ENCODE measurements at regions of chr7 and their contacts with region 1.

Region 1: GRCh38 chr7:151038951-151039849 is 9.1 kb upstream of the ASIC3 start:
- DNase-seq: no peak
- H3K4me3 Mint-ChIP-seq: peak overlapping the region; percentile 19
- H3K27ac Mint-ChIP-seq: peak overlapping the region; percentile 96
- H3K4me1 Mint-ChIP-seq: peaks cover 18% of the 10 kb centered on the region
- H3K27me3 Mint-ChIP-seq: no peaks in the 10 kb centered on the region

Region 2: DNA sequence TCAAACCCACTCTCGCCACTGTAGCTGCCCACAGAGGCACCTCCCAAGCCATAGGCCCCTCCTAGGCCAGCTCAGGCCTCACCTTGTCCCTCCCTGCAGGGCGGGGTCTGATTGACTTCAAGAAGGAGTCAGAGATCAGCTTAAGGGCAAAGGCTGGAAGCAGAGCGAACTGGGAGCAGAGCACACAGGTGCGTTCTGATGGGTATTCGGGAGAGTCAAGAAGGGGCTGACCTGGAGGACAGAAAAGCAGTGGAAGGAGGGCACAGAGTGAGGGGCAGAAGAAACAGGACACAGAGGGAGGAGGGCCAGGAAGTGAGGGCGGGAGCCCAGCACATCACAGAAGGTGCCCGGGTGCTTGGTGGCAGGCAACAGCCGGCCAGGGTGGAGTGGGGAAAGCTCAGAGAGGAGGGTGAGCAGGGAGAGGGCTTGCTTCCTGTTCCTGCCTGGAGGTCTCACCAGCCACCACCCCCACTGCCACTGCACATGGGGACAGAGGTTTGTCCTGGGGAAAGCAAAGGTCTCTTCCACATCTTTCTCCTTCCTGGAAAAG is 186.8 kb before region 1 on chr7 and contains the start of gene AOC1:
- intact Hi-C with region 1: no loop called
- DNase-seq: no peak
- H3K4me3 Mint-ChIP-seq: no peak within 1 kb of the TSS
- H3K27ac Mint-ChIP-seq: no peak within 1 kb of the TSS
- H3K4me1 Mint-ChIP-seq: no peaks in the 10 kb centered on the region
- H3K27me3 Mint-ChIP-seq: peaks cover 13% of the 10 kb centered on the region
- total RNA-seq, gene AOC1: not detected in 2 replicates

Region 3: GRCh38 chr7:150988230-150989226 is 50.7 kb before region 1 on chr7:
- intact Hi-C with region 1: no loop called
- DNase-seq: peak; percentile 57
- H3K4me3 Mint-ChIP-seq: peak overlapping the region; percentile 58
- H3K27ac Mint-ChIP-seq: no peak overlapping the region
- H3K4me1 Mint-ChIP-seq: peaks cover 25% of the 10 kb centered on the region
- H3K27me3 Mint-ChIP-seq: peaks cover 30% of the 10 kb centered on the region

Region 4: DNA sequence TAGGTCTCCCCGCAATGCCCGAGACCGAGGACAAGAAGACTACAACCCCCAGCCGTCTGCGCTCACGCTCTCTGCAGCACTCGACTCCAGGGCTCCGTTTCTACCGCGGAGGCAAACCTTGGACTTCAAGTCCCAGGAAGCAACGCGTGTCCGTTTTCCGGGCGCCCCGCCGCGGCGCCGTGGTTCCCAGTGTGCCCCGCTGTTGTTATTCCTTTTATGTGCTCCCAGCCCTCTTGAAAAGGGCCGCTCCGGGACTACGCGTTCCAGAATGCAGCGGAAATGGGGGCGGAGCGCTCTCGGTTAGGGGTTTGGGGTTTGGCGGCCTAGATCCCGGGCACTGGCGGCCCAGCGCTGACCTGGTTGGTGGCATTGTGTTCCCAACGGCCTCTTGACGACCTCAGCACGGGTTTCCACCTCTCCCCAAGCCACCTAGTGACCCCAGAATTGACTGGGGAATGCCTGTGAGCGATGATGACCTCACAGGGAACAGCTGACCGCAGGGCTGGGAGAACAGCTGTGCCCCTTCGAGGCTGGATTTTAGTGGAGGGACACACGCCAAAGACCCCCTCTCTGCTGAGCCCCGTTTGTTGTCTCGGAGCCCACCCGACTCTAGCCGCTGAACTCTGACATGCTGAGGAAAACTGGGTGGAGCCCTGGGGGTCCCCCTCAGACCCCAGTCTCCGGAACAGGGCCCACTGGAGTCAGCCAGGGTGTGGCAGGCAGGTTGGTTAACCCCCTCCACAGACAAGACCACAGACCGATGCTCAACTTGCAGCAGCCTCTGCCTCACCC is 19.0 kb after region 1 on chr7:
- intact Hi-C with region 1: loop called (anchors 1 kb)
- DNase-seq: peak; percentile 95
- H3K4me3 Mint-ChIP-seq: peak overlapping the region; percentile 93
- H3K27ac Mint-ChIP-seq: peak overlapping the region; percentile 92
- H3K4me1 Mint-ChIP-seq: peaks cover 46% of the 10 kb centered on the region
- H3K27me3 Mint-ChIP-seq: no peaks in the 10 kb centered on the region

Region 5: DNA sequence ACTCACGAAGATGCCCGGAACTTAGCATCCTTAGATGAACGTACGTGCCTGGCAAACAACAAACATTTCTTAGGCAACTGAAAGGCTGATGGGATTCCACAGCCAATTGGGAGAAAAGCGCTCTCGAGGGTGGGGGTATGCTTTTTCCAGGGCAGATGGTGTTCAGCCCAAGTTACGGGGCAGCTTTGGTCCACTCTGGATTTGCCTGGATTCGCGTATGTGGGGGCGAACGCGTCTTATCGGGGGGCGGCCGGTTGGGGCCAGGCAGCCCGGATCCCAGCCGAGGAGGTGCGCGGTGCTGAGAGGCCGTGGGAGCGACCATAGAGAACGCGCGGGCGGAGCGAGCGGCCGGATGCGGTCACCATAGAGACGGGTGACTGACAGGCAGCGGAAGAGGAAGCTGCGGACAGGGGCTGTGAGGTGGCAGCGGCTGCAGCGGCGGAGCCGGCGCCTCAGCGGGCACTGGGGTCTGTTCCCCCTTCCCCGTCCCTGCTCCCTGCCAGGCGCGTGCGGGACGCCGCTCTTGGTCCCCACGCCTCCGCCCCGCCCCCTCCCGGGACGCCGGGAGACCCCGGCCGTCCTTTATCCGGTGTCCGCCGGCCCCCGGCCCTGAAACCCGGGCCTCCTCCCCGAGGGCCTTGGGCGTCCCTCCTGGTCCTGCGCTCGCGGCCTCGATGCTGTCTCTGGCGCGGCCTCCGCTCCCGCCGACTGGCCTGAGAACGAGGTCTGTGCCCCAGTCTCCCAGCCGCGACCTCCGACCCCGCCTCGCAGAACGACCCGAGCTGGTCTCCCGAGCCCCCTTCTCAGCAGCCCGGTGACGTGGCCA is 193.1 kb after region 1 on chr7 and contains the start of gene CHPF2:
- intact Hi-C with region 1: no loop called
- DNase-seq: peak; percentile 89
- H3K4me3 Mint-ChIP-seq: peak within 1 kb of the TSS; percentile 100
- H3K27ac Mint-ChIP-seq: peak within 1 kb of the TSS; percentile 98
- H3K4me1 Mint-ChIP-seq: peaks cover 35% of the 10 kb centered on the region
- H3K27me3 Mint-ChIP-seq: peaks cover 2% of the 10 kb centered on the region
- total RNA-seq, gene CHPF2: 45.6 and 48.5 TPM in 2 replicates

Region 6: DNA sequence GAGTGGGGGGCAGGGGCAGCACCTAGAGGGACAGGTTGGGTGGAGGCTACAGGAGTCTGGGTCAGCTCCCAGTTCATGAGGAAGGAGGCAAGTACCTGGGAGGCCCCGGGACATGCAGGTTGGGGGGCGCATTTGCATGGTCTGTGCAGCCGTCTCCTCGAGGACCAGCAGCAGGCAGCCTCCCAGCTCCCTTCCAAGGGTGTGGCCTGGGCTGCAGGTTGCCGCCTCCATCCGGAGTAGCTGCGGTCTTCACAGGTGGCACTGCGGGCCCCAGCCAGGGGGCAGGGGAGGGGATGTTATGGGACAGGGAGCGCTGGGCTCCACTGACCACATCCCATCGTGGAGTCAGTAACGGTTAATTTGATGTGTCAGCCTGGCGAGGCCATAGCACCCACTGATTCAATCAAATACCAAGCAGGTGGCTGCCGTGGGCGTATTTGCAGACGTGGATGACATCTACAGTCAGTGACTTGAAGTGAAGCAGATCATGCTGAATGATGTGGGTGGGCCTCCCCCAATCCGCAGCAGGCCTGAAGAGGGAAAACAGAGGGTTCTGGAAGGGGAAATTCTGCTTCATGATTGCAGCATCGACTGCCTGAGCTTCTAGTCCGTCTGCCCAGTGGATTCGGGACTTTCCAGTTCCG is 756.1 kb after region 1 on chr7:
- intact Hi-C with region 1: no loop called
- DNase-seq: peak; percentile 6
- H3K4me3 Mint-ChIP-seq: no peak overlapping the region
- H3K27ac Mint-ChIP-seq: peak overlapping the region; percentile 40
- H3K4me1 Mint-ChIP-seq: no peaks in the 10 kb centered on the region
- H3K27me3 Mint-ChIP-seq: peaks cover 2% of the 10 kb centered on the region

Measured in activated T-helper 1 cell treated with anti-CD3 and anti-CD28 coated beads, Interleukin-12 subunit alpha, Interleukin-12 subunit beta, Interleukin-2, Interleukin-4 antibody, amounts not matched to agents 30 ng/mL and 10 ng/mL and 1 ng/mL, durations not matched to agents 14 hours and 24 hours and 36 hours (primary cell).